ENCODE measurements at regions of chr11 and their contacts with region 1.

Region 1: GRCh38 chr11:119166368-119167076 is 2.0 kb upstream of the NLRX1 start:
- DNase-seq: no peak
- H3K4me3 ChIP-seq: no peak overlapping the region
- CTCF ChIP-seq: no peak
- POLR2A ChIP-seq: no peak

Region 2: DNA sequence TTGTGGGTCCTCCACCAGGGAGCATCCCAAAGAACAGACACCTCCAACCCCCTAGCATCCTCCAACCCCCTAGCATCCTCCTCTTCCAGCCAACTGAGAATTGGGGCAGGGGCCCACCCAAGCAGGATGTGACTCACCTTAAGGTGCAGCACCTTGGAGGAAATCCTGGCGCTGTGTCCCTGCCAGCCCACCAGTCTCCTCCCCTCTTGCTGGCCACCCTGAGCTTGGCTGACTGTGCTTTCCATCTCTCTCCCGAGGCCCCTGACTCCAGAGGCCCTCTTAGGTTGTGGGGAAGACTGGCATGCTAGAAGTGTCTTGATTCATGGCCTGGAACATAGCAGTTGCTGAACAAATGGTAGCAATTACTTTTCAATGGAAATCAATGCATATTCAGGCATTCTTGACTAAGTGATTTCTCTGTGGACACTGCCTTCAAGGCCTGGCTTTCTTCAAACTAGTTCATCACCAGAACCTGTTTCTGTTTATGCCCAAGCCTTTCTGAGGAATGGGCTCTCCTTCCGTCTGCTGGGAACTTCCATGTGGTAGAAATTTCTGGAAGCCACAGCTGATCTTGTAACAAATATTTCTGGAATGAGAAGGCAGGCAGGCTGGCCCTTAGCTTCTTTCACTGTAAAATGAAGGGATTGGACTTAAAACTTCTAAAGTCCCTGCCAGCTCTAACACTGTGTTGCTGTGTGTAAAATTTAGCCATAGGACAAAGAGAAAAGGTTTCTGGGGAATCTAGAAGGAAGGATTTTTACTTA is 1778.3 kb before region 1 on chr11:
- intact Hi-C with region 1: no loop called
- DNase-seq: peak in 1 of 2 donors; percentile 12
- H3K4me3 ChIP-seq: no peak overlapping the region
- CTCF ChIP-seq: no peak
- POLR2A ChIP-seq: no peak

Region 3: DNA sequence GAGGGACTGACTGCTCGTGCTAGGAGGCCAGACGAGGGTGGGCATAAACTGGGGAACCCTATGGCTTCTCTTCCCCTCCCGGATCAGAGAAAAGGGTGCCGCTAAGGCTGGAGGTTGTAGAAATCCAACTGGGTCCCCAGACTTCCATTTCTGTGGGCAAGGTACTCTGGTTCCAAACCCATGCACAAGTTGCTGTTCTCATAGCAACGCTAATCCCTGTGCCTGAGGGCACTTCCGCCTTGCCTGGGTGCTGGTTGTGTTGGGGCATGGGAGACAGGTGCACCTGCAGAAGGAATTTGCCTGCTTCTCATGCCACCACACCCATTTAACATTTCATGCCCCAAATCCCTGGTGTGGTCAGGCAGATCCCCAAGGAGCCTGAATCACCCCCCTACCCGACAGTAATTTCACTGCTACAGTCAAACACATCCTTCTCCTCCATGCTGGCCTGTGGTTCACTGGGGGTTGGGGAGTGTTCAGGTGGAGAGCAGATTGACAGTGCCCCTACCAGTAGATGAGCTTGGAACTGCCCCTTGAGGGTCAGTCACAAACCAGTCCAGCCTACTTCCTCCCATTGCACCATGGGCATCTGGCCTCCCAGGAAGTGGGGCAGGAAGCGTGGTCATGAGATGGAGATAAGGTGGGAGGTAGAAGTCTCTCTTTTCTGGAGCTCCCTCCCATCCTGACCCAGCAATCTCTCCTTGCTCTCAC is 58.2 kb before region 1 on chr11:
- intact Hi-C with region 1: loop called (anchors 2 kb)
- DNase-seq: no peak
- H3K4me3 ChIP-seq: peak overlapping the region; percentile 85
- CTCF ChIP-seq: no peak
- POLR2A ChIP-seq: no peak

Region 4: DNA sequence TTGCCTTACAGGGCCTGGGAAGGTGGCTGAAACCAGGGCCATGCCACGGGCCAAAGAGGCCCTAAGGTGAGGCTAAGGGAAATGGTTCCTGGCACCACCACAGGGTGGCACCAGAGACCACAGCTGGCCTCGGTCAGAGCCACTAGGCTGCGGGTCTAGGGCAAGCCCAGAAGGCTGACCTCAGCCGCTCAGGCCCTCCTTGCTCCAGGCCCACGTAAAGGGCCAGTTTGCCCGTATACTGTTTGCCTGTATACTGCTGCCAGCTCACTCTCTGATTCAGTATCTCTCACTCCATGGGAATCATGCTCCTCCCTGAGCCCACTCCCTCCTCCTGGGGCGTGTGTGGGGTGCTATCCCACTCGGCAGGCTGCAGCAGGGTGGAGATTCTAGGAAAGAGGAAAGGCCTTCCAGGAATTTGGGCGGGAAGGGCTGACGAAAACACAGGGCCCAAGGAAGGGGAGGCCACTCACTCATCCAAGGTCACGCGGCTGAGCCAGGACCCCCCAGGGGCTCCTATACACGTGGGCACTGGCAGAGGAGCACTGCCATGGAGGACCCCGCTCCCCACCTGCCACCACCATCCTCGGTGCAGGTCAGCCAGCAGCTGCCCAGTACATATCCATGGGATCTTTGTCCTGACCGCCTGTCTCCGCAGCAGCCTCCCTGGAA is 500.1 kb after region 1 on chr11:
- intact Hi-C with region 1: no loop called
- DNase-seq: peak; percentile 66 to 92
- H3K4me3 ChIP-seq: no peak overlapping the region
- CTCF ChIP-seq: peak in 1 of 3 donors; percentile 74
- POLR2A ChIP-seq: no peak

Measured in lower leg skin (tissue), 4 donors.